SK-N-SH (cell line): ENCODE measurements at regions of chr7 and their contacts with region 1.

Region 1: DNA sequence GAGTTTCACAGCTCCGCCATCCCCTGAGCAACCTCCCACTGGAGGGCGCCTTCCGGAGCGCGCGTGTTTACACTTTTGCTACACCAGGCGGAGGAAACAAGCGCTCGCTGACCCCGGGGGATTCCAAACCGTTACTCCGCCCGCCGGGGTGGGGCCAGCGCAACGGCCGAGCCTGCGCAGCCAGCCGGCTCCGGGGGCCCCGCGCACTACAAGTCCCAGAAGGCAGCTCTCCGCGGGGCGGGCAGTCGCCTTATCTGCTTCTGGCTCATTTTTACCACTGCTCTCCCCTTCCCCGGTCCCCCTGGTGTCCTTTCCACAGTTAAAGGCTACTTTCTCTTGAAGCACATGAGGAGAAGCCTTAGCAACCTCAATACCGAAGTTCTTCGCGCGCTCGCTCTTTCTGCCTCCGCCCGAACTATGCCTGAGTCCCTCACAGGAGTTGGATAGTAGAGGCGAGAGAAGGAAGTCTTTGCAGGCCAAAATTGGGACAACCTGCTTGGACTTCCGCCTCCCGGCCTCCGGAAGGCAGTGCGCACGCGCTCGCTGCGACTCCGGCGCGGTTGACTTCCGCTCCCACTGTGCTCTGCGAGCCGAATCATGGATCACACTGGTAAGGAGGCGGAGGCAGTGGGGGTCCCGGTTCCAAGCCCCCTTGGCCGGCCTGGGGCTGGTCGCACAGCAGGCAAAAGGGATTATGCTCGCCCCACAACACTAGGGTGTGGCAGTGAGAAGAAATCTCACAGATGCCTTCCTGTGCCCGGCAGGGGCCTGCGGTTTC is at the start of gene CBLL1:
- DNase-seq: peak; percentile 97
- H3K4me3 ChIP-seq: peak within 1 kb of the TSS; percentile 96 to 100
- H3K27ac ChIP-seq: peak within 1 kb of the TSS; percentile 98 to 100
- H3K4me1 ChIP-seq: peaks cover 7 to 20% of the 10 kb centered on the region in 2 experiments; a peak in 3 of 4 replicates
- H3K27me3 ChIP-seq: no peaks in the 10 kb centered on the region
- CTCF ChIP-seq: peak; percentile 93
- EP300 ChIP-seq: peak in 1 of 2 experiments; percentile 59; a peak in 2 of 4 replicates
- RAD21 ChIP-seq: peak; percentile 69
- polyA plus RNA-seq, gene CBLL1: 26.0 and 28.8 TPM in 2 replicates

Region 2: GRCh38 chr7:107462740-107463444 is 280.9 kb before region 1 on chr7:
- CTCF ChIA-PET with region 1: interaction called, 20 read pairs
- POLR2A ChIA-PET with region 1: interaction called, 4 read pairs
- DNase-seq: peak; percentile 60
- H3K4me3 ChIP-seq: no peak overlapping the region; a peak in 1 of 4 replicates
- H3K27ac ChIP-seq: peak overlapping the region in 1 of 2 experiments; percentile 23; a peak in 1 of 4 replicates
- H3K4me1 ChIP-seq: peaks cover 0 to 13% of the 10 kb centered on the region in 2 experiments; a peak in 2 of 4 replicates
- H3K27me3 ChIP-seq: no peaks in the 10 kb centered on the region
- CTCF ChIP-seq: peak; percentile 96
- EP300 ChIP-seq: no peak
- RAD21 ChIP-seq: peak; percentile 100

Region 3: GRCh38 chr7:107725151-107725740 is 18.5 kb before region 1 on chr7:
- CTCF ChIA-PET with region 1: interaction called, 11 read pairs
- POLR2A ChIA-PET with region 1: interaction called, 4 read pairs
- DNase-seq: peak; percentile 71
- H3K4me3 ChIP-seq: no peak overlapping the region
- H3K27ac ChIP-seq: no peak overlapping the region
- H3K4me1 ChIP-seq: no peaks in the 10 kb centered on the region
- H3K27me3 ChIP-seq: no peaks in the 10 kb centered on the region
- CTCF ChIP-seq: peak; percentile 97
- EP300 ChIP-seq: no peak
- RAD21 ChIP-seq: peak; percentile 94

Region 4: DNA sequence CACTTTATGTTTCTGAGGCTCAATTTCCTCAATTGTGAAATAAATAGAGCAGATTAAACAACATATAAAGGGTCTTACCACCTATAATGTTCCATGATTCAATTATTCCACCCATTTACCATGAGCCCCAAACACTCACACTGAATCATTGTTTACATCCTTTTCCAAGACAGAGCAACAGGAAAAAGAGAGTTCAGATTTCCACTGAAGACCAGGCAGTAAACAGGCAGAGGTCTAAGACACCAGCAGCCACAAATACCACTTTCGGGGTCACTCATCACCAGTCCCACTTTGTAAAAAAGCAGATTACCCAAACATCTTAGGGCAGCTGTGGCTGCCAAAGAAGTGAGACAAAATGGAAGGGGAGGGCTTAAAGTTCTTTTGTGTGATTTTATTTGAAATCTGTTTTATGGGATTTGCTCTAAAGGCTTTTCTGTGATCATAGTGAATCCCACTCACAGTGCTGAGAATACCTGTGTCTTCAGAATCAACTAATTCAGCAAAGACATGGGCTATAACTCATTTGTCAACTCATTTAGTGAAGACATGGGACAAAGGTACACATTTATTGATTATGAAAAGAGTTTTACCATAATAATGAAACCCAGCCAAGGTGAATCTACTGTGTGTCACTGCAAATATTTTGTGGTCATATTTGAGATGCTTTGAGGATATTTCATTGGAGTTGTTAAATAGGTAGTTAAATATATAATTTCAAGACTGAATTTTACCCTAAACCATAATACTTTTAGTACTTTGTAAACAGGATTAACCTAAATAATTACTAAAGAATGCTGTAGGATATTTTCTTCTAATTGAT is 122.4 kb after region 1 on chr7:
- CTCF ChIA-PET with region 1: interaction called, 284 read pairs
- POLR2A ChIA-PET with region 1: interaction called, 3 read pairs
- DNase-seq: no peak
- H3K4me3 ChIP-seq: no peak overlapping the region
- H3K27ac ChIP-seq: no peak overlapping the region
- H3K4me1 ChIP-seq: no peaks in the 10 kb centered on the region; a peak in 2 of 4 replicates
- H3K27me3 ChIP-seq: no peaks in the 10 kb centered on the region; the same call in 1 of the 2 replicates
- CTCF ChIP-seq: no peak
- EP300 ChIP-seq: no peak
- RAD21 ChIP-seq: no peak

Region 5: GRCh38 chr7:107890962-107891635 is 147.3 kb after region 1 on chr7 and contains the start of gene DLD:
- CTCF ChIA-PET with region 1: interaction called, 23 read pairs
- POLR2A ChIA-PET with region 1: interaction called, 6 read pairs
- DNase-seq: peak; percentile 99
- H3K4me3 ChIP-seq: peak within 1 kb of the TSS; percentile 85 to 94
- H3K27ac ChIP-seq: peak within 1 kb of the TSS; percentile 81 to 95
- H3K4me1 ChIP-seq: peaks cover 10 to 31% of the 10 kb centered on the region in 2 experiments; a peak in 3 of 4 replicates
- H3K27me3 ChIP-seq: peaks cover 1% of the 10 kb centered on the region; the same call in 1 of the 2 replicates
- CTCF ChIP-seq: no peak
- EP300 ChIP-seq: no peak
- RAD21 ChIP-seq: no peak
- polyA plus RNA-seq, gene DLD: 140 and 197 TPM in 2 replicates